PC-3 (cell line): ENCODE measurements at regions of chr14 and their contacts with region 1.

Region 1: DNA sequence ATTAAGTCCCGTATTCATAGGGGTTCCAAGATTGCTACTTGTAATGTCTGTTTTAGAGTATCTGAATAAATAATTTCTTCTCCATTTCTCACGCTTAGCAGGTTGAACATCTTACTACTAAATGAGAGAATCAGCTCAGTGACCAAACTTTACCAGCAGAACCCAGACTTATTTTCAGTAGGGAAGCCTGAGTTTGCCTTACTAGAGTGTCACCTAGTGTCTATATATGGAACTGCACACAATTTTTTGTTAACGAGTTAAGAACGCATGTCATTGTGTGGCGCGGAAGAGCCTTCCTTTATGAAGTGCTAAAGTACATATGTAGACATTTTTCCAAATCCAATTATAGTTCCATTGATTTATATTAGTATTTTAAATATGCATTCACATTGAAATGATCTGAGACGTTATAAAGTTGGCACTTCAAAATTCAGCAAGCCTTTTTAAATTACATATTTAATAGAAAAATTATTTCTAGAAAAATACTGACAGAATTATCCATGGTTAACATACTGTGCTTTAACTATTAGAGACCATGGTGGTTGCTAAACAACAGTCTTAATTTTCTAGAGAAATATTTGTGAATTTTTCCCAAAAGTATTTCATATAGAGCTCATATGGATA is 88.3 kb downstream of the RPS29 start:
- DNase-seq: peak; percentile 95
- ATAC-seq: peak; percentile 86
- H3K4me3 ChIP-seq: no peak overlapping the region
- H3K27ac ChIP-seq: no peak overlapping the region
- H3K4me1 ChIP-seq: no peaks in the 10 kb centered on the region
- H3K27me3 ChIP-seq: no peaks in the 10 kb centered on the region
- CTCF ChIP-seq: peak; percentile 98

Region 2: DNA sequence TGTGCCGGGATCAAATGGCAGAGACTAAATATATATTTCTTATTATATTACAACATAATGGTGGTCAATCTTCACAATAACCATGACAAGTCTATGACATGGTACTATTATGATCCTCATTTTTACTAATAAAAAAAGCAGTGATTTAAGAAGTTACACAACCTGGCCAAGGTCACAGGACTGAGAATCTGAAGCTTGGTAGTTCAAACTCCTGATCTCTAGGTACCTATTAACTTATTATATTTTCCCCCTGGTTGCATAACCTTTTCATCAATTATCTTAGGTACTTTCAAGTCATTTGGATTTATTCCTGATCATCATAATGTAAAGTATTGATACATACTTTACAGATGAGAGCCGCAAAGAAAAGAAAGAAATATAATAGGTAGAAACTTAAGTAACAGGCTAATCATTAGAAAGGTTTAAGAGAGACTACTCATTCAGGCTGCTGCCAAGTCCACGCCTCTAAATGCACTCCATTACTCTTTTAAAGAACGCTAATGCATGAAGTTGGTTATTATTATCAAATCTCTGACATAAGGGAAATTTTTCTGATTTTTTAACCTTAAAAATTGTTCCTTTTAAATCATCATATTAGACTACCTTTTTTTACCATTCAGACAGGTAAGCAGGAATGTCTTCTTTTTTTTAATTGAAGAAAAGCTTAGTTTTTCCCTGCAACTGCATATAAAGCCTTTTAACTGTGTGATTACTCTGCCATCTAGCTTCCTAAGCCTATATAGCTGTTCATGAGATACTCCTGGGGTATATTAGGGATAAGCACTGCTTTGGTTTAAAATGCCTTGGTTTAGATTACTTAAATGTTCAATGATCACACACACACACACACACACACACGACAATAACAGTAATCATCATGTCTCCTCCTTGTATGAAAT is 52.7 kb after region 1 on chr14:
- CTCF ChIA-PET with region 1: interaction called, 22 read pairs
- POLR2A ChIA-PET with region 1: interaction called, 10 read pairs
- intact Hi-C with region 1: loop called (anchors 2 kb)
- DNase-seq: peak; percentile 73
- ATAC-seq: peak; percentile 75
- H3K4me3 ChIP-seq: no peak overlapping the region
- H3K27ac ChIP-seq: no peak overlapping the region
- H3K4me1 ChIP-seq: peaks cover 10% of the 10 kb centered on the region
- H3K27me3 ChIP-seq: no peaks in the 10 kb centered on the region
- CTCF ChIP-seq: peak; percentile 88